GM10248 (cell line): ENCODE measurements at regions of chr11 and their contacts with region 1.

Region 1: GRCh38 chr11:128522055-128522942 is 65.1 kb downstream of the ETS1 start:
- DNase-seq: peak; percentile 95
- CTCF ChIP-seq: no peak

Region 2: DNA sequence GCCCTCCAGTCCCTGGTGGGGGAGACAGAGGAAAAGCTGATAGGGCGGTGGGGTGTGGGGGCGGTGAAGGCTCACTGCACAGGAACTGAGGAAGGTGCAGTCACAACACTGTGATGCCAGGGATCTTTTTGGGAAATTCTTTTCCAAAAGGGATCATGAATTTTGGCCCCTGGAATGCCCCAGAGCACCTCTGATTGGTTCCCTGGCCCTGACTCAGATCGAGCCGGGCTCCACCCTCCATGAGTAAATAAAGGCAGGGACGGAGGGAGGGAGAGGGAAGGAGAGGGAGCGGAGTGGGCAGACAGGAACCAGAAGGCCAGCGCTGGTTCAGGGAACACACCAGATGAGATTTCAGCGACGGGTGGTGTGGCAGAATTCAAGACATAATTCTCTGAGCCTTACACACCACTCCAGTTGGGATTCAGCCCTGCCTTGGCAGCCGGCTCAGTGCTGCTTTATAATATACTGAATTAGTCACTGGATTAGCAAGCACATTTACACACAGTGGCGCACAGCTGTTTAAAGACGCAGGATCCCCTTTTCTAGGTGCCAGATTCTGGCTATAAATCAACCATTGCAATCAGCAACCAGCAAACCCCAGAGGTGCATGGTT is 15.2 kb before region 1 on chr11:
- CTCF ChIA-PET with region 1: interaction called, 70 read pairs
- POLR2A ChIA-PET with region 1: interaction called, 3 read pairs
- DNase-seq: no peak
- CTCF ChIP-seq: no peak

Region 3: DNA sequence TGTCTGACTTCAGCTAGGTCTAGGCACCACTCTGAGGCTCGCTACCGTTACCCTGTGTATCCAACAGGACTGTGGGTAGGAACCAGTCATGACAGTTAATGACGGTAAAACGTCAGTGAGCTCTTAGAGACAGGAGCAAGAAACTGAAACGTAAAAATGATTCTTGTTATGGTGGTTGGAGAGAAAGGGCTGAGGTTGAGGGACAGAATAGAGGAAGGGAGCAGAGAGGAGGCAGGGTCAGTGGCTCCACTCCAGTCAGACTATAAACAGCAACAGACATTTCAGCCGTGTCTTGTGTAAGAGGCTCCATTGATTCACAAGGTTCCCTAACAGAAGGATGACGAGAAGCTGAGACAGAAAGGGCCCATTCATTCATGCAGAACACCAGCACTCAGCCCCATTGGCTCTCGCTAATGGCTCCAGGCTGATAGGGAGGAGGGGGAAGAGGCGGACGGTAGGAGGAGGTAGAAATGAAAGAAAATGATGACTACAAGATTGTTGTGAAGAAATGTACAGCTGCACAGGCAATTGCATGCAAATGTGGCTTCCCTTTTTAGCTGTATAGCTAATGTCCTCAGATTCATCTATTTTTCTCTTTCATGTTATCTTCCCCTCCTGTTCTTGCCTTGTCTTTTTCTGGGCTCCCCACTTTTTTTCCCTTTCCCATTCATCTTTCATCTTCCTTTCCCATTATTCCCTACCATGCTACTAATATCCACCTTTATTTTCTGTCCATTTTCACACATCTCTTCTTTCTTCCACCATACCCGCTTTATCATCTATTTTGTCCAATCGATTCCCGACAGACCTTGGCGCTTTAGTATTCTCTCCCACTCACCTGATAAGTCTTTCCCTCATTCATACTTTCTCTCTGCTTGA is 30.7 kb after region 1 on chr11:
- CTCF ChIA-PET with region 1: interaction called, 41 read pairs
- POLR2A ChIA-PET with region 1: interaction called, 6 read pairs
- DNase-seq: peak; percentile 80
- CTCF ChIP-seq: no peak